GM10248 (cell line): ENCODE measurements at regions of chr12 and their contacts with region 1.

Region 1: DNA sequence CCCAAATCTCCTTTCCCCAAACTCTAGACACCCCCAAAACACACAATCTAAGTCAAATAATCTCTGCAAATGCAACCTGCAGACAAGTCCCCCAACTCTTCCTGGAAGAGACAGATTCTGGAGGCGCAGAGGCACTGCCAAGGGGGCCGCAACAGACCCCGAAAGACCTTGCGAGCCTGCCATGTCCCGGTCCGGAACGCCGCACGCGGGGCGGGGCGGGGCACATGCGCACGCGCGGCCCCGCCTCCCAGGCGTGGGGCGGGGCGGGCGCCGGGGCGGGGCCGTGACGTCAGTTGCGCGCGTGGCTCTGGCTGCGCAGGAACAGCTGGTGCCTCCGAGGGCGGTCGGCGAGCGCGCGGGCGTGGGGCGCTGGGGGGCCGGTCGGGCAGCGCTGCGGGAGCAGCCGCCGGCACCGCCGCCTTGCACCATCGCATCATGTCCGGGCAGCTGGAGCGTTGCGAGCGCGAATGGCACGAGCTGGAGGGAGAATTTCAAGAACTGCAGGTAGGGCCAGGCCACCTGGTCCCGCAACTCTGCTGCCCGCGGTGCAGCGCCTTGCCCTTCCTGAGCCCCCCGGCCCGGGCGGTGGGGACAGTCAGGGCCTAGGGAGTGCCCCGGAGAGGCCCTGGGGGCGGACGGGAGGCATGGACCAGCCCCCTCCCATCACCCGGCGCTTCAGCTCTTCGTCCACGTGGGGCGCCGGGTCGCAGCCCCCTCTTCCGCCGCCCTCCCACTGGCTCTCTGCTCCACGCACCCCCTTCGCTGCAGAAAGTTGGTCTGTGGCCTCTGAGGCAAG is at the start of gene TMEM120B:
- DNase-seq: peak; percentile 95
- CTCF ChIP-seq: no peak

Region 2: DNA sequence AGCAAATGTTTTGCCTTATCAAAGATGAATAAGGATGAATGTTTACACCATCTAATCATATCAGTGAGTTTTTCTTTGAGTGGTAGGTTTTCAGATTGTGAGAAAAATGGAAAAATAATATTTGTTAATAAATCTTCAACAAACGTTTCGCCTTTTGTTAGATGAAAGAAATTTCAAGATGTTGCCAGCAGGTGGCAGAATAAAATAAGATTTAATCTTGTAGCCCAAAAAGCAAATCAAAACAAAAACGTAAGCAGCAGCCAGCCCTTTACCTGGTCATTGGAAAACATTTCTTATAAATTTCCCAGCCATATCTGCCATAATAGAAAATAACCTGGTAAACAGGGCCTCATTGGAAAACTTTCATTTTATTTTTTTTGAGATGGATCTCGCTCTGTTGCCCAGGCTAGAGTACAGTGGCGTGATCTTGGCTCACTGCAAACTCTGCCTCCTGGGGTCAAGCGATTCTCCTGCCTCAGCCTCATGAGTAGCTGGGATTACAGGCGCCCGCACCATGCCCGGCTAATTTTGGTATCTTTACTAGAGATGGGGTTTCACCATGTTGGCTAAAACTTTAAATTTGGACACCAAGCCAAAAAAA is 15.5 kb before region 1 on chr12:
- CTCF ChIA-PET with region 1: interaction called, 19 read pairs
- POLR2A ChIA-PET with region 1: no interaction called
- DNase-seq: peak; percentile 69
- CTCF ChIP-seq: peak; percentile 44

Region 3: DNA sequence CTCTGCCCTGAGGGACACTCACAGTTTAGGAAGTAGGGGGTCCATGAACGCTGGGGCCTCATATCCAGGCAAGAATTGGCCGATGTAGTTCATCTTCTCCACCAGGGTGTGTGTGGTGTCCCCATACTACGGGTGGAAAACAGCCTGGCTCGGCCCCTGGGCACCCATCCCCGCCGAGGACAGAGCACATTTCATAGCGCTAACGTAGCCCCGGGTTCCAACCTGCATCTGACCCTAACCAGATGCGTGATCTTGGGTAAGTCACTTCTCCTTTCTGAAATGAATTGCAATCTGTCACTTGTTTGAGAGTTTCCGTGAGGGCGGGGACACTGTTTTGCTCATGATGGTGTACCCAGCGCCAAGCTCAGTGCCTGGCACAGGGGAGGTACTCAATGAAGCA is 137.0 kb after region 1 on chr12:
- CTCF ChIA-PET with region 1: no interaction called
- POLR2A ChIA-PET with region 1: no interaction called
- DNase-seq: no peak
- CTCF ChIP-seq: no peak